Activated T-helper 1 cell treated with anti-CD3 and anti-CD28 coated beads, Interleukin-12 subunit alpha, Interleukin-12 subunit beta, Interleukin-2, Interleukin-4 antibody, amounts not matched to agents 30 ng/mL and 10 ng/mL and 1 ng/mL, durations not matched to agents 14 hours and 24 hours and 36 hours (primary cell): ENCODE measurements at regions of chr9 and their contacts with region 1.

Region 1: DNA sequence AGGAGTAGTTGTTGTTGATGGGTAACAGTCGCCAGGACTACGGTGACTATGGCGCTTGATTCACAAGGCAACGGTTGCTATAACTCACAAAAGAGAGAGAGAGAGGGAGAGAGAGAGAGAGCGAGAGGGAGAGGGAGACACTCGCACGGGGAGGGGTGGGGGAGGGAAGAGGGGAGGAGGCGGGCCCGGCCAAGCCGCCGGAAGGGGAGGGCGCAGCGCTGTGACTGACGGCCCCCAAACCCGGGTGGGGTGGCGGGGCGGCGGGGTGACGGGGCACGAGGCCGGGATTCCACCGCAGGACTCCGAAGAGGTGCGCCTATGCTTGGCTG is at the start of gene RFX3:
- DNase-seq: peak; percentile 83
- H3K4me3 Mint-ChIP-seq: peak within 1 kb of the TSS; percentile 87
- H3K27ac Mint-ChIP-seq: peak within 1 kb of the TSS; percentile 99
- H3K4me1 Mint-ChIP-seq: peaks cover 63% of the 10 kb centered on the region
- H3K27me3 Mint-ChIP-seq: peaks cover 2% of the 10 kb centered on the region
- total RNA-seq, gene RFX3: 11.2 and 11.3 TPM in 2 replicates

Region 2: DNA sequence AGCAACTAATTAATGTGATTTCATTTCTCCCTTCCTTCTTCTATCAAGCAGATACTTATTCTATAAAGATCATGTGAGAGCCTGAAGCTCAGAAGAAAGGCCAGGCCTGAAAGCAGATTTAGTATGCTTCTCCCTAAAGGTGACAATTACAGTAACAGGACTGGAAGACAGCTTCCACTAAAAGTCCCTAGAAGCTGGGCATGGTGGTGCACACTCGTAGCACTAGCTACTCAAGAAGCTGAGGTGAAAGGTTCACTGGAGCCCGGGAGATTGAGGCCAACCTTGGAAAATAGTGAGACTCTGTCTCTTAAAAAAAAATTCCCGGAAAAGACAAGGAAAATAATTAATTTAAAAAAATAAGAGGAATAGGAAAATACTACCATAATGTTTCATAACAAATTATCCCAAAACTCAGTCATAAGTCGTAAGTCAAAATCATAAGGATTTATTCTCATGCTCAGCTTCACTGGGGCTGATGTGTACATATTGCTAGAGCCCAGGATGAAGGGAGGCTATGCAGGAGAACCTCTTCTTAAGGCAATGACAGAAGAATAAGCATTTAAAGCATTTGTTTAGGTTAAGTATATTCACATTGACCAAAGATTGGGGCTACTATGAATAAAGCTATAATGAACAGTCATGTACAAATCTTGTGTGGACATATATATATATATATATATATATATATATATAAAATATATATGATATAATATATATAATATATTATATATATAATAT is 1721.5 kb before region 1 on chr9:
- intact Hi-C with region 1: no loop called
- DNase-seq: no peak
- H3K4me3 Mint-ChIP-seq: no peak overlapping the region
- H3K27ac Mint-ChIP-seq: no peak overlapping the region
- H3K4me1 Mint-ChIP-seq: no peaks in the 10 kb centered on the region
- H3K27me3 Mint-ChIP-seq: no peaks in the 10 kb centered on the region

Region 3: DNA sequence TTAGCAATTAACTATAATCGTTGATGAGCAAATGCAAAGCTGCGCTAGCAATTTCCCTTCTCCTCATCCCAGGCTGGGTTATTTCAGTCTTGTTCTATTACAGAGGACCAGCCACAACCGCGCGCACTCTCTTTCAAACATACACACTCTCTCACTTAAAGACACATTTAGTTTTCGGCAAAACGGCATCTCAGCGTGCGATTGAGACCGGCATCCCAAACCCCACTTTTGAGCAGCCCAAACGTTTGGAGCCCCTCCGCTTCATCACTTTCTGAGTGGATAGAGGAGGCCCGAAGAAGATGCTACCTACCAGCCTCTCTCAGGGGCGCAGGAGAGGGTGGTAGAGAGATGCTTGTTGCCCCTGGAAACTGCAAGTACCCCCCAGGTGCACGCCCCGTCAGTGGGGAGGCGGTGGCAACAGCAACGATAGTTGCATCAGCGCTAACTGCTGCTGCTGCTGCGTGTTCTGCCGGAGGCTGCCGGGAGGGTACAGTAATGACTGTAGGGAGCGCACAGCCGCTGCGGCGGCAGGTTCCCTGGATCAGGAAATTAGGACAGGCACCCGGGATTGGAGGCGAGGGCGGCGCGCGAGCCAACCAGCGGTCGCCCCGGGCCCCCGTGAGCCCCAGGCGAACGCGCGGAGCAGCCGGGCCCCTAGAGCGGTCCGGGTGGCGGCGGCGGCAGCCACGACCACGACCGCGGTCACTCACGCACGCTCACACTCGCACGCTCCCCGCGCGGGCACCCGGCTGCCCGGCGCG is 904.7 kb before region 1 on chr9:
- intact Hi-C with region 1: loop called (anchors 10 kb)
- DNase-seq: peak; percentile 44
- H3K4me3 Mint-ChIP-seq: peak overlapping the region; percentile 90
- H3K27ac Mint-ChIP-seq: peak overlapping the region; percentile 93
- H3K4me1 Mint-ChIP-seq: peaks cover 17% of the 10 kb centered on the region
- H3K27me3 Mint-ChIP-seq: peaks cover 26% of the 10 kb centered on the region

Region 4: DNA sequence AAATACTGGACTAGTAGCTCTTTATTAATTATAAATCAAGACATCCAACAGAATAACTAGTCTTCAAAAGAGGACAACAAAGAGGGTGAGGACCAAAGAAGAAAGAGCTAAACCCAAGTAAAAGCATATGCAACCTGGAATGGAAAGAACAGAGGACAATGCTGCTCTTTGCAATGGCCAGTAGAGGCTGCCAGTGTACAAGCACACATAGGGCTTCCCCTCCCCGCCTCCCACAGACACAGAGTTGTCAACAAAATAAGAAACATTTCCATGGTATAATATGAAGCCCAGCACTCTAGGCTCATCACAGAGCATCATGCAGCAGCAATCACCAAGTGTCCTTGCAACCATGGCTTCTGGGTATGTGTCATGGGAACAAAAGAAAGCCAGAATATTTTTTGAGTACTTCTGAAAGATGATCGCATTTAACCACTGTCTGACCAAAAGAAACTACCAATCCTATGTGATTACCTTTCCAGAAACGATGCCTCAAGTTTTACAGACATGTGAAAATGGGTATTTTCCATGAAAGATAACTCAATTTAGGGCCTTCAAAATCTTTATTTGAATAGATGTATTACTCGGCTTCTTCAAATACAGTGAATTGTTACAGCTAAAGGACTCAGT is 58.1 kb before region 1 on chr9:
- intact Hi-C with region 1: loop called (anchors 1 kb)
- DNase-seq: peak; percentile 40
- H3K4me3 Mint-ChIP-seq: no peak overlapping the region
- H3K27ac Mint-ChIP-seq: no peak overlapping the region
- H3K4me1 Mint-ChIP-seq: peaks cover 6% of the 10 kb centered on the region
- H3K27me3 Mint-ChIP-seq: no peaks in the 10 kb centered on the region

Region 5: GRCh38 chr9:3549225-3549624 is 23.4 kb after region 1 on chr9:
- intact Hi-C with region 1: no loop called
- DNase-seq: no peak
- H3K4me3 Mint-ChIP-seq: no peak overlapping the region
- H3K27ac Mint-ChIP-seq: no peak overlapping the region
- H3K4me1 Mint-ChIP-seq: no peaks in the 10 kb centered on the region
- H3K27me3 Mint-ChIP-seq: no peaks in the 10 kb centered on the region

Region 6: GRCh38 chr9:3732077-3733038 is 206.6 kb after region 1 on chr9:
- intact Hi-C with region 1: loop called (anchors 5 kb)
- DNase-seq: peak; percentile 41
- H3K4me3 Mint-ChIP-seq: no peak overlapping the region
- H3K27ac Mint-ChIP-seq: peak overlapping the region; percentile 40
- H3K4me1 Mint-ChIP-seq: peaks cover 24% of the 10 kb centered on the region
- H3K27me3 Mint-ChIP-seq: no peaks in the 10 kb centered on the region

Region 7: DNA sequence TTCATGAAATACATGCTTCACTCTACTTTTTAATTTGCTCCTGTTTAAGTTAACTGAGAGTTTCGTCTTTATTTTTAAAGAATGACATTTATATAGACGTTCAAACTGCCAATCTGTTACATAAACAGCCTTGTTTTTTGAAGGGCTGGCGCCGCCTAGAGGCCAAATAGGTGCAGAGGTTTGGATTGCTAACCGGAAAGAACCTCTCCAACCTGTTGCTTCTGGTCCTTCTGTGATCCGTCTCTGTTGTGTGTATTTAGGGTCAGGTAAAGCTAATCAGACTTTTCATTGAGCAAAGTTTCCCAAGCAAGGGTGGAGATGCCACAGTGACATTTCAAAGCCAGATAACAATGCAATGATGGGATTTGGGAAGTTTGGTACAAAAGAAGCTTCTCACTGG is 813.6 kb after region 1 on chr9:
- intact Hi-C with region 1: loop called (anchors 1 kb)
- DNase-seq: peak; percentile 69
- H3K4me3 Mint-ChIP-seq: no peak overlapping the region
- H3K27ac Mint-ChIP-seq: peak overlapping the region; percentile 77
- H3K4me1 Mint-ChIP-seq: peaks cover 10% of the 10 kb centered on the region
- H3K27me3 Mint-ChIP-seq: peaks cover 4% of the 10 kb centered on the region

Region 8: GRCh38 chr9:5450359-5451091 is 1924.7 kb after region 1 on chr9 and contains the start of gene CD274:
- intact Hi-C with region 1: loop called (anchors 5 kb)
- DNase-seq: peak; percentile 85
- H3K4me3 Mint-ChIP-seq: peak within 1 kb of the TSS; percentile 96
- H3K27ac Mint-ChIP-seq: peak within 1 kb of the TSS; percentile 90
- H3K4me1 Mint-ChIP-seq: peaks cover 85% of the 10 kb centered on the region
- H3K27me3 Mint-ChIP-seq: no peaks in the 10 kb centered on the region
- total RNA-seq, gene CD274: 60.4 and 61.7 TPM in 2 replicates